ENCODE measurements at regions of chr19 and their contacts with region 1.

Region 1: GRCh38 chr19:52139252-52140031 is at the start of gene ZNF616:
- DNase-seq: peak; percentile 58 to 97 (median 95)
- ATAC-seq: peak; percentile 74
- H3K4me3 ChIP-seq: peak within 1 kb of the TSS; percentile 99
- H3K4me3 Mint-ChIP-seq: peak within 1 kb of the TSS; percentile 92 to 99 (median 96)
- H3K27ac ChIP-seq: peak within 1 kb of the TSS; percentile 89
- H3K27ac Mint-ChIP-seq: peak within 1 kb of the TSS; percentile 88 to 98 (median 96)
- H3K4me1 ChIP-seq: peaks cover 15 to 18% of the 10 kb centered on the region in 2 donors
- H3K4me1 Mint-ChIP-seq: peaks cover 20 to 44% (median 33%) of the 10 kb centered on the region in 7 donors
- H3K27me3 ChIP-seq: no peaks in the 10 kb centered on the region
- H3K27me3 Mint-ChIP-seq: no peaks in the 10 kb centered on the region
- total RNA-seq, gene ZNF616: 2.8 to 18.5 (median 6.1) TPM

Region 2: DNA sequence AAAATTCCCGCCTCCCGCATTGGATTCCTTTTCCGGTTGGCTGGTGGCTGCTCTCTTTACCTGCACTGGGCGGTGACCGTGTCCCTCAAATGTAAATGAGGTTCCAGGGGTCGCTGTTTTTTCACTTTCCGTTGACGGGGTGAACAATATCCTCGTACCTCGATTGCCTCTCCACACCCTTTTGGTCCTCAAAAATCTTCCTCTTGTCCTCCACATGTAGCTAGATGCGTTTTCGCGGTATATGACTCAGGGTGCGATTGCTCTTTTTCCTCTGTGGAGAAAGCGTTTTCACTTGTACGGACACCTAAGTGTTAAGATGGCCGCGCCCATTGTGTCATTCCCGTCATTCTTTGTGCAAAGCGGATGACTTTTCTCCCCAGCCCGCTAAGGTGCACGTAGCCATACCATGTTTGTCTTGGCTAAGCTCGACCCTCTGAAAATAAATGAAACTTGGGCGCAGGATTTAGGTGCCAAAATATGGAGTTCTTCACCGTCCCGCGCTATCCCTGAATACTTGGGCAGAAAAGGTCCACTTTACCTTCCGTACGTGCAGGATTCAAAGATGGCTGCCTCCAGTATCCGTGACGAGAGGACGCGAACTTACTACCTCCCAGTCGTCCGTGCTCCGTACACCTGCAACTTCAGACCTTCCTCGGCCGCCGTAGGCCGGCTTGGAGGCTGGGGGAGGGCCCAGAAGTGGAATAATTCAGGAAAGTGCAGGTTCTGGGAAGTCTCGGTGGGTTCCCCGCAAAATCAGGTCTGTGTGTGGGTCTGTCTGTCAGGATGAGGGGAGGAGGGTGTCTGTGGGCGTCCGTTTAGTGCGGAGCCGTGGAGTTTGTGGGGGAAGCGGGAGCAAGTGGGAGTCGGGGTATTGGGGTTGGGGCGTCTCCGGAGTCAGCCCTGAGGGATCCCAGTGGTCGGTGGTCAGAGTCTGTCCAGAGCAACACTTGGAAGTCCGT is 212.4 kb before region 1 on chr19 and contains the start of gene ZNF613:
- CTCF ChIA-PET with region 1: no interaction called
- POLR2A ChIA-PET with region 1: no interaction called
- intact Hi-C with region 1: loop called in 1 of 2 experiments (anchors 1 kb)
- DNase-seq: peak; percentile 65 to 87 (median 83)
- ATAC-seq: peak; percentile 92
- H3K4me3 ChIP-seq: peak within 1 kb of the TSS; percentile 70
- H3K4me3 Mint-ChIP-seq: peak within 1 kb of the TSS; percentile 90 to 100 (median 97)
- H3K27ac ChIP-seq: peak within 1 kb of the TSS; percentile 77
- H3K27ac Mint-ChIP-seq: peak within 1 kb of the TSS; percentile 87 to 96 (median 92)
- H3K4me1 ChIP-seq: peaks cover 4% of the 10 kb centered on the region in 2 donors
- H3K4me1 Mint-ChIP-seq: peaks cover 19 to 41% (median 36%) of the 10 kb centered on the region in 7 donors
- H3K27me3 ChIP-seq: no peaks in the 10 kb centered on the region
- H3K27me3 Mint-ChIP-seq: no peaks in the 10 kb centered on the region
- total RNA-seq, gene ZNF613: 1.5 to 9.6 (median 5.2) TPM

Region 3: GRCh38 chr19:52048555-52049501 is 90.6 kb before region 1 on chr19 and contains the start of gene ZNF432:
- CTCF ChIA-PET with region 1: no interaction called
- POLR2A ChIA-PET with region 1: no interaction called
- intact Hi-C with region 1: loop called in 1 of 2 experiments (anchors 1 kb)
- DNase-seq: peak; percentile 75 to 87 (median 82)
- ATAC-seq: peak; percentile 92
- H3K4me3 ChIP-seq: peak within 1 kb of the TSS; percentile 78
- H3K4me3 Mint-ChIP-seq: peak within 1 kb of the TSS; percentile 95 to 100 (median 98)
- H3K27ac ChIP-seq: peak within 1 kb of the TSS; percentile 97
- H3K27ac Mint-ChIP-seq: peak within 1 kb of the TSS; percentile 97 to 99 (median 99)
- H3K4me1 ChIP-seq: peaks cover 0 to 7% of the 10 kb centered on the region in 2 donors
- H3K4me1 Mint-ChIP-seq: peaks cover 10 to 43% (median 25%) of the 10 kb centered on the region in 7 donors
- H3K27me3 ChIP-seq: no peaks in the 10 kb centered on the region
- H3K27me3 Mint-ChIP-seq: no peaks in the 10 kb centered on the region
- total RNA-seq, gene ZNF432: 13.2 to 25.0 (median 18.1) TPM

Region 4: GRCh38 chr19:52171321-52172169 is 32.1 kb after region 1 on chr19 and contains the start of gene ZNF836:
- CTCF ChIA-PET with region 1: interaction called, 4 read pairs
- POLR2A ChIA-PET with region 1: interaction called, 15 read pairs
- intact Hi-C with region 1: loop called (anchors 1 kb)
- DNase-seq: peak; percentile 72 to 95 (median 91)
- ATAC-seq: peak; percentile 98
- H3K4me3 ChIP-seq: peak within 1 kb of the TSS; percentile 92
- H3K4me3 Mint-ChIP-seq: peak within 1 kb of the TSS; percentile 92 to 98 (median 96)
- H3K27ac ChIP-seq: peak within 1 kb of the TSS; percentile 92
- H3K27ac Mint-ChIP-seq: peak within 1 kb of the TSS; percentile 96 to 99 (median 98)
- H3K4me1 ChIP-seq: peaks cover 18 to 19% of the 10 kb centered on the region in 2 donors
- H3K4me1 Mint-ChIP-seq: peaks cover 23 to 48% (median 45%) of the 10 kb centered on the region in 7 donors
- H3K27me3 ChIP-seq: no peaks in the 10 kb centered on the region
- H3K27me3 Mint-ChIP-seq: no peaks in the 10 kb centered on the region
- total RNA-seq, gene ZNF836: 20.1 to 57.5 (median 27.4) TPM

Region 5: DNA sequence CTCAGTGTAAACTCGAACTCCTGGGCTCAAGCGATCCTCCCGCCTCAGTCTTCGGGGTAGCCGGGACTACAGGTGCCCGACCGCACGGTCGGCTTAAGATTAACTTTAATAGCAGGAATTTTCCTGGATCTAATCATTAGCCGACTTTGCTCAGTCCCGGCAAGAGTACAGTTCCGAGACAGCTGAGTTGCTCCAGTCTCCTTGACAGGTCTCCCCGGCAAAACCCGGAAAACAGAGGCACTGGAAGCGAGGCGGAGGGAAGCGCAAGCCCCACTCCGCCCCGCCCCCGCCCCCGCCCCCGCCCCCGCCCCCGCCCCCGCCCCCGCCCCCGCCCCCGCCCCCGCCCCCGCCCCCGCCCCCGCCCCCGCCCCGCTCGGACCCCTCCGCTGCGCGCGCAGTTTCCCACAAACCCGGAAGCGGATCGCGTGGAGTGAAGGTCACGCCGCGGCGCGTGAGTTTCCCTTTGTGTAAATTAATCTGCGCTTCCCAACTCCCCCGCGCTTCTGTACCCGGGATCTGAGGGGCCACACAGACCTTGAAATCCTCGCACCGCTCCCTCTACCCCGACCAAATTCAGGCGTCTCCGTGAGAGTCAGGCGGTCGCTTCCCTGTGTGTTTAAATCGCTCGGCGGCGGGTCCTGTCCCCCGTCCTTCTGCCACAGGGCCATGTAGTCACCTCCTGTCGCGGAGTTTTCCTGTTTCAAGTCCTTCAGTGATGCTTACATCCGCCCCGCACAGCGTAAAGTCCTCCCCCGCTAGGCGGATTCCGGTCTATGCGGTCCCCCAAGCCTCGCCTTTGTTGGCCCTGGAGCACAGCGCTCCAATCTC is 157.5 kb after region 1 on chr19 and contains the start of gene ZNF480:
- CTCF ChIA-PET with region 1: no interaction called
- POLR2A ChIA-PET with region 1: no interaction called
- intact Hi-C with region 1: loop called (anchors 1 kb)
- DNase-seq: peak; percentile 67 to 91 (median 87)
- ATAC-seq: peak; percentile 89
- H3K4me3 ChIP-seq: peak within 1 kb of the TSS; percentile 85
- H3K4me3 Mint-ChIP-seq: peak within 1 kb of the TSS; percentile 89 to 99 (median 98)
- H3K27ac ChIP-seq: peak within 1 kb of the TSS; percentile 97
- H3K27ac Mint-ChIP-seq: peak within 1 kb of the TSS; percentile 95 to 99 (median 98)
- H3K4me1 ChIP-seq: peaks cover 4 to 5% of the 10 kb centered on the region in 2 donors
- H3K4me1 Mint-ChIP-seq: peaks cover 15 to 32% (median 19%) of the 10 kb centered on the region in 7 donors
- H3K27me3 ChIP-seq: no peaks in the 10 kb centered on the region
- H3K27me3 Mint-ChIP-seq: peaks cover 0 to 3% (median 0%) of the 10 kb centered on the region in 5 donors
- total RNA-seq, gene ZNF480: 8.5 to 28.9 (median 13.3) TPM

Region 6: DNA sequence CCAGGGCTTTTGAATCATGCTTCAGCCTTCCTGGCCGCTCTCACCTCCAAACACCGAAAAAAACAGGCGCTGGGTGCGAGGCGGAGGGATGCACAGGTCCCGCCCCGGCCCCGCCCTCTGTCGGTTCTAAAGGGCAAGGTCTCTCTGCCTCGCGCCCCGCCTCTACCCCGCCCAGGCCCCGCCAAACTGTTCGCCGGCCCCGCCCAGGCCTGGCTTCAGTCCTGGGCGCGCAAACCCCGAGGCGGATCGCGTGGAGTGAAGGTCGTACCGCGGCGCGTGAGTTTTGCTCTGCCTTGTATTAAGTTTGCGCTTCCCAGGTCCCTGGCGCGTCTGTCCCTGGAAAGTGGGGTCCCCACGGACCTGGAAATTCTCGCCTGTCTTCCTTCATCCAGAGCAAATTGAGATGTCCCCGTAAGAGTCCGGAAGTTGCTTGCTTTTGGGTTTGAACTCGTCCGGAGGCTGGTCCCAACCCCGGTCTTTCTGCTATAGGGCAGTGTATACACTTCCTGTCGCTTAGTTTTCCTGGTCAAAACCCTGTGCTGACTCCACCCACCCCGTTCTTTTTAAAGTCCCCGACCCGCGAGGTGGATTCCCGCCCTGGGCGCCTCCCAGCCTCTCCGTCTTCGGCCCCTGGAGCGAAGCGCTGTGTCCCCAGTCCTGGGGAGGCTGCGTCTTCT is 396.5 kb after region 1 on chr19:
- CTCF ChIA-PET with region 1: no interaction called
- POLR2A ChIA-PET with region 1: no interaction called
- intact Hi-C with region 1: loop called in 1 of 2 experiments (anchors 1 kb)
- DNase-seq: peak; percentile 60 to 87 (median 82)
- ATAC-seq: peak; percentile 99
- H3K4me3 ChIP-seq: peak overlapping the region; percentile 84
- H3K4me3 Mint-ChIP-seq: peak overlapping the region; percentile 83 to 99 (median 90)
- H3K27ac ChIP-seq: peak overlapping the region; percentile 87
- H3K27ac Mint-ChIP-seq: peak overlapping the region; percentile 69 to 95 (median 87)
- H3K4me1 ChIP-seq: no peaks in the 10 kb centered on the region
- H3K4me1 Mint-ChIP-seq: peaks cover 16 to 44% (median 34%) of the 10 kb centered on the region in 7 donors
- H3K27me3 ChIP-seq: no peaks in the 10 kb centered on the region
- H3K27me3 Mint-ChIP-seq: no peaks in the 10 kb centered on the region

Region 7: GRCh38 chr19:52748336-52748950 is 609.0 kb after region 1 on chr19:
- CTCF ChIA-PET with region 1: no interaction called
- POLR2A ChIA-PET with region 1: no interaction called
- intact Hi-C with region 1: loop called in 1 of 2 experiments (anchors 1 kb)
- DNase-seq: peak in 7 of 9 donors; percentile 18 to 43 (median 35)
- ATAC-seq: no peak
- H3K4me3 ChIP-seq: no peak overlapping the region
- H3K4me3 Mint-ChIP-seq: no peak overlapping the region
- H3K27ac ChIP-seq: no peak overlapping the region
- H3K27ac Mint-ChIP-seq: no peak overlapping the region
- H3K4me1 ChIP-seq: no peaks in the 10 kb centered on the region
- H3K4me1 Mint-ChIP-seq: peaks cover 0 to 13% (median 6%) of the 10 kb centered on the region in 7 donors
- H3K27me3 ChIP-seq: no peaks in the 10 kb centered on the region
- H3K27me3 Mint-ChIP-seq: no peaks in the 10 kb centered on the region